ENCODE measurements at regions of chr15 and their contacts with region 1.

Region 1: GRCh38 chr15:72285927-72286516 is 13.7 kb upstream of the PARP6 start:
- DNase-seq: peak; percentile 13 to 74 (median 46)
- ATAC-seq: peak; percentile 80
- H3K4me3 ChIP-seq: no peak overlapping the region
- H3K4me3 Mint-ChIP-seq: no peak overlapping the region
- H3K27ac ChIP-seq: no peak overlapping the region
- H3K27ac Mint-ChIP-seq: no peak overlapping the region
- H3K4me1 ChIP-seq: no peaks in the 10 kb centered on the region
- H3K4me1 Mint-ChIP-seq: no peaks in the 10 kb centered on the region
- H3K27me3 ChIP-seq: no peaks in the 10 kb centered on the region
- H3K27me3 Mint-ChIP-seq: no peaks in the 10 kb centered on the region
- CTCF ChIP-seq: peak; percentile 79

Region 2: DNA sequence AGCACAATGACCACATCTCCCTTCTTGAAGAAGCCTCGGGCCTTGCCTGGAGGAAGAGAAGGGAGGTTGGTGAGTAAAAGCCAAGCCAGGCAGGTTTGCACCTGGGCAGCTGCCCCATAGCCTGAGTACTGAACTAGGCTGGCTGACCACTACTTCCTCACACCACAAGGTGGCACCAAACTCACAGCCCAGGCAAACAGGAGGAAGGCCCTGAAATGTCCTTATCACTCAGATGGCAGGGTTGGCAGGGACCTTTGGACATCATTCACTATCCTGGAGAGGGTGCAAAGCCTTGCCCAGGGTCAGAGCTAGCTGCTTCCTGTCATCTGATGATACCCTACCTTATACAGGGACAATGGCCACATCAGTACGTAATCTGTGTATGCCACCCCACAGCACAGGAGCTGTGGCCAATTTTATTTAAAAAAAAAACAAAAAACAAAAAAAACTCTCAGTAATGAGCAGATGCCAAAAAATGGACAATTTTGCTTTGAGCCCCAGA is 86.3 kb before region 1 on chr15:
- CTCF ChIA-PET with region 1: interaction called, 4 read pairs
- POLR2A ChIA-PET with region 1: interaction called, 3 read pairs
- intact Hi-C with region 1: loop called (anchors 1 kb)
- DNase-seq: peak; percentile 61 to 86 (median 70)
- ATAC-seq: peak; percentile 87
- H3K4me3 ChIP-seq: no peak overlapping the region
- H3K4me3 Mint-ChIP-seq: peak overlapping the region; percentile 4
- H3K27ac ChIP-seq: no peak overlapping the region
- H3K27ac Mint-ChIP-seq: no peak overlapping the region
- H3K4me1 ChIP-seq: peaks cover 15% of the 10 kb centered on the region
- H3K4me1 Mint-ChIP-seq: peaks cover 9% of the 10 kb centered on the region
- H3K27me3 ChIP-seq: peaks cover 11 to 13% of the 10 kb centered on the region in 2 experiments
- H3K27me3 Mint-ChIP-seq: peaks cover 17% of the 10 kb centered on the region
- CTCF ChIP-seq: peak; percentile 91

Region 3: DNA sequence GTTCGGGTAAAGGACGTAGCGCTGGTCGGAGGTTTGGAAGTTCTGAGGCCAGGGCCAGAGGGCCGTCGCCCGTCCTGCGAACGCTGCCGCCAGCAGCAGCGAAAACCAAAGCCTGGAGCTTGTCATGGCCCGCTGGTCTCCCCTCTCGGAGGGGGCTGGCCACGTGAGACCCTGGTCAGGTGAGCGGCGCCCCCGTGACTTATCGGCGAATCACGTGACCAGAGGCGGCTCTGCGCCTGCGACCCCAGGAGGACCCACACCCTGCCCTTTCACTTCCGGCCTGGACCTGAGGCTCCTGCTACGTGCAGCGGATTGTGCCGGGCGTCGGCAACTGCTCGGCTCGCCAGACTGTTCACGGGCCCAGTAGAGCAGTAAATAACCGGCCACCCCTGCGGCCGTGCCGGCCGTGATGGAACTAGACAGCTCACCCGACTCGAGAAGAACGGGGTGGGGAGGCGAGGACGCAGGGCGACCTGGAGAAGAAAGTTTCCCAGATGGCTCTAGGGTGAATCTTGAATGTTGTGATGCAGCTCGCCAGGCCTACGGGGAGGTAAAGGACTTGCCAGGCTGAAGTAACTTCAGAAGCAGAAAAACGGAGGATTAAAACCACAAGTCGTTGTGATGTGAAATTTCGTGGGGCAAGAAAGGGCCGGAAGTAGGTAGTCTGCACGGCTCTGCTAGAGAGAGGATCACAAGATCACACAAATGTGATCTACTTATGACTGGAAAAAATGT is 90.0 kb after region 1 on chr15 and contains the start of gene HEXA:
- CTCF ChIA-PET with region 1: no interaction called
- POLR2A ChIA-PET with region 1: no interaction called
- intact Hi-C with region 1: no loop called
- DNase-seq: peak; percentile 89 to 97 (median 94)
- ATAC-seq: peak; percentile 68
- H3K4me3 ChIP-seq: peak within 1 kb of the TSS; percentile 87
- H3K4me3 Mint-ChIP-seq: peak within 1 kb of the TSS; percentile 94
- H3K27ac ChIP-seq: peak within 1 kb of the TSS; percentile 76 to 86
- H3K27ac Mint-ChIP-seq: peak within 1 kb of the TSS; percentile 96
- H3K4me1 ChIP-seq: peaks cover 28% of the 10 kb centered on the region
- H3K4me1 Mint-ChIP-seq: peaks cover 57% of the 10 kb centered on the region
- H3K27me3 ChIP-seq: no peaks in the 10 kb centered on the region
- H3K27me3 Mint-ChIP-seq: peaks cover 9% of the 10 kb centered on the region
- CTCF ChIP-seq: no peak
- total RNA-seq, gene HEXA: 66.3 to 66.9 TPM

Measured in CD4-positive, alpha-beta T cell (primary cell).